ENCODE measurements at regions of chr12 and their contacts with region 1.

Region 1: GRCh38 chr12:27434673-27435565 is 11.6 kb upstream of the SMCO2 start:
- DNase-seq: peak; percentile 37
- H3K4me3 Mint-ChIP-seq: no peak overlapping the region
- H3K27ac Mint-ChIP-seq: no peak overlapping the region
- H3K4me1 Mint-ChIP-seq: peaks cover 17% of the 10 kb centered on the region
- H3K27me3 Mint-ChIP-seq: peaks cover 2% of the 10 kb centered on the region

Region 2: DNA sequence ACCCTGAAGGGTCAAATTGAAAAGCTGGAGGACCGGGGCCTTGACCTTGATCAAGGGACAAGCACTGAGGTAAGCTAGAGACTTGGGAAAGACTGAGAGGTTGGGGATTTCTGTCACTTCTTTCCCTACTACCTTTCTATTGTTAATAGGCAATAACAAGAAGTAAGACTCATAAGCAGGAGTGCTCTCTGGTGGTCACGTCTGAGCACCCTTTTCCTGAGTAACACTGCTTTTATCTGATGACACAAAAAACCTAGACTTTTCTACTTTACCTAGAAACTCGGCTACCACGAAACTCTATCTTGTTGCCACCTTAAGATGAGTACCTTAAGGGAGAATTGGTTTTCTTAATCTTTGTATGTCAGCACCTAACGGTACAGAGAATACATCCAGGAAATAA is 53.6 kb after region 1 on chr12:
- CTCF ChIA-PET with region 1: interaction called, 3 read pairs
- intact Hi-C with region 1: loop called (anchors 1 kb)
- DNase-seq: no peak
- H3K4me3 Mint-ChIP-seq: no peak overlapping the region
- H3K27ac Mint-ChIP-seq: no peak overlapping the region
- H3K4me1 Mint-ChIP-seq: no peaks in the 10 kb centered on the region
- H3K27me3 Mint-ChIP-seq: peaks cover 9% of the 10 kb centered on the region

Region 3: DNA sequence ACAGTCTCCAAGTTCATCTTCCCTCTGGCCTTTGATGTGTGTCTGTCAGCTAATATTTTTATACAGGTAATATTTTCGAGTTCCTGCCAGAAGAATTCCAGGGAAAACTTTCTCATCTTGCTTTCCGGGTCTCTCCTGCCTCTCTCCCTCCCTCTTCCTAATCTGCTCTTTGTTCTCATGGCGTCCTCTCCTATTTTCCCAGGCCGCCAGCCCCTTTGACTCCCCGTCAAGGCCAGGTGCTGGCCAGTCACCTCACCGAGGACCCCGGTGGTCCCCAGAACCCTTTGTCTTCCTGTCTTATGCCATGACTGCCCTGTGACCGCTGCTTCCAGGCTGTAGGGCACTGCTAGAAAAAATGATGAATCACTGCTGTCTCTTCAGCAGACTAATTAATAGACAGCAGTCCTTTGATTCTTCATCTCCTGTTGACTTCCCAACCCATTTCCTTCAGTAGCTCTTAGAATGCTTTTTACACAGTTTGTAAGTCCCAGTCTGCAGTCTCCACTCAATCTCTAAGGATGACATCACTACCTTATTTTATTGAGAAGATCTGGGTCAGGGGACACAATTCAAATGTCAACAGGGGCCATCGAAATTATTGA is 129.8 kb after region 1 on chr12:
- CTCF ChIA-PET with region 1: interaction called, 13 read pairs
- intact Hi-C with region 1: loop called (anchors 1 kb)
- DNase-seq: no peak
- H3K4me3 Mint-ChIP-seq: no peak overlapping the region
- H3K27ac Mint-ChIP-seq: no peak overlapping the region
- H3K4me1 Mint-ChIP-seq: peaks cover 10% of the 10 kb centered on the region
- H3K27me3 Mint-ChIP-seq: no peaks in the 10 kb centered on the region

Region 4: DNA sequence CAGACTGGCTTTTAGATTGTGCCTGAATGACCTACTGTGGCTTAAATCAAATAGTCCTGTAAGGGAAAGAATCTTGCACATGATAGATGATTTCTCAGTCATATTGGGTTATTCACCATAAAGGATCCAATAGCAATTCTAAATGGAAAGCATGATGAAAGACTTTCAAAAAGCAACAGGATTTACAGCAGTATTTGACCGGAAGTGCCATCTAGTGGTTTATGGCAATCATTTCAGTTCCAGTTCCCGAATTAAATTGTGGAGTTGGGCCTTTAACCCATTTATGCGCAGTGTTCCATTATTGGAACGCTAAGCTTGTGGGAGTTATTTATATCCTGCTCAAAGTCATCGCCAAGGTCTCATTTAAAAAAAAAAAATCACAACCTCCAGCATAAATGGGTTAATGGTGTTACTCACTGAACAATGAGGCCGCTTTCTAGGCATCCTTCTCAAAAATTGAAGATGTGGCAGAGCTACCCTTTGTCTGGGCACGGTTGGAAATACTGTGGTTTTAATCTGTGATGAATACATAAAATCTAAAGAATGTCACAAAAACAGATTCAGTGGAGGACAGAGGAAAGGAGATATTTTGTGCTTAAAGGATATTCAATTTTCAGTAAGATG is 200.5 kb after region 1 on chr12:
- CTCF ChIA-PET with region 1: interaction called, 29 read pairs
- intact Hi-C with region 1: loop called (anchors 1 kb)
- DNase-seq: peak; percentile 14
- H3K4me3 Mint-ChIP-seq: no peak overlapping the region
- H3K27ac Mint-ChIP-seq: no peak overlapping the region
- H3K4me1 Mint-ChIP-seq: no peaks in the 10 kb centered on the region
- H3K27me3 Mint-ChIP-seq: no peaks in the 10 kb centered on the region

Measured in activated naive CD4-positive, alpha-beta T cell treated with anti-CD3 and anti-CD28 coated beads for 36 hours (primary cell).